Activated CD4-positive, alpha-beta memory T cell treated with anti-CD3 and anti-CD28 coated beads, Interleukin-2, amount 10 ng/mL, durations not matched to agents 7 days and 5 days (primary cell): ENCODE measurements at regions of chr7 and their contacts with region 1.

Region 1: GRCh38 chr7:155298834-155299534 is 1.3 kb downstream of the INSIG1 start:
- DNase-seq: peak; percentile 99
- H3K4me3 Mint-ChIP-seq: peak overlapping the region; percentile 89
- H3K27ac Mint-ChIP-seq: peak overlapping the region; percentile 99
- H3K4me1 Mint-ChIP-seq: peaks cover 64% of the 10 kb centered on the region
- H3K27me3 Mint-ChIP-seq: no peaks in the 10 kb centered on the region

Region 2: DNA sequence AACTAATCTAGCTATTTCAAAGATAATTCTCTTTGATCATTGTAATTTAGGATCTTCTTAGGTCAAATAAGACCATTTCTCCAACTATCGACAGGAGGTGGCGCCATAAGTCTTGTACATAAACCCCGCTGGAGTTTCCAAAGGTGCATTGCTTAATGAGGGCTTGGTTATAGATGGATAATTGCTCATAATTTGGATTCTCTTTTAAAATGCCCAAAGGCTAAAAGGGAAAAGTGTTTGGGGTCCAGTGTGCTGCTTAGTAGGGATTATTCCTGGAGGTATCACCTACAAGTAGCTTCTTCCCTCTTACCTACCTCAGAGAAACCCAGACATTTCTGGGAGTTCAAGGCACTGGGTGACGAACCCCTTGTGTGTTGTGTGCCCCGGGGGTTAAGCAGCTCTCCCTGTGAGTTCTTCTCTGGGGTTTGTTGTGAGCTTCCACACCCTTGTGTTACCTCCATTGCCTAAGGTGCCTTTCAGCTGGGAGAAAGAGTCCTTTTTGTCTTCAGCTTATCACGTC is 371.3 kb before region 1 on chr7:
- CTCF ChIA-PET with region 1: interaction called, 10 read pairs
- POLR2A ChIA-PET with region 1: interaction called, 40 read pairs
- DNase-seq: peak; percentile 82
- H3K4me3 Mint-ChIP-seq: peak overlapping the region; percentile 92
- H3K27ac Mint-ChIP-seq: peak overlapping the region; percentile 73
- H3K4me1 Mint-ChIP-seq: peaks cover 17% of the 10 kb centered on the region
- H3K27me3 Mint-ChIP-seq: peaks cover 27% of the 10 kb centered on the region

Region 3: DNA sequence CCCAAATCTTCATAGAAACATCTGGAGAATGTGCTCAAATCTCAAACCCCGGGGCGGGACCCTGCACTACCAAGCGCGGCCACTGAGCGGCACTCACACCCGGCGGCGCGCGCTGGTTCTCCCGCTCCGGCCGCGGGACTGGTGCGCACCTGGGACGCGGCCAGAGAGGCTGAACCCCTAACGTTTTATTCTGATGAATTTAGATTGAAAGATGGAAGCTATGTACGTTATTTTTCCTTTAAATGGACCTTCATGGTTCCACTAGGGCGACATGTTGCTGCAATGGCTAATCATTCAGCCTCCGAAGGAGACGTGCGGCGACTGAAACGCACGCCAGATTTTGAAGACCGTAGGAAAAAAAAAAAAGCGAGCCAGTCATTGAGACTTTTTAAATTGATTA is 108.3 kb before region 1 on chr7:
- CTCF ChIA-PET with region 1: interaction called, 20 read pairs
- POLR2A ChIA-PET with region 1: interaction called, 32 read pairs
- DNase-seq: peak; percentile 72
- H3K4me3 Mint-ChIP-seq: no peak overlapping the region
- H3K27ac Mint-ChIP-seq: no peak overlapping the region
- H3K4me1 Mint-ChIP-seq: peaks cover 42% of the 10 kb centered on the region
- H3K27me3 Mint-ChIP-seq: peaks cover 1% of the 10 kb centered on the region

Region 4: DNA sequence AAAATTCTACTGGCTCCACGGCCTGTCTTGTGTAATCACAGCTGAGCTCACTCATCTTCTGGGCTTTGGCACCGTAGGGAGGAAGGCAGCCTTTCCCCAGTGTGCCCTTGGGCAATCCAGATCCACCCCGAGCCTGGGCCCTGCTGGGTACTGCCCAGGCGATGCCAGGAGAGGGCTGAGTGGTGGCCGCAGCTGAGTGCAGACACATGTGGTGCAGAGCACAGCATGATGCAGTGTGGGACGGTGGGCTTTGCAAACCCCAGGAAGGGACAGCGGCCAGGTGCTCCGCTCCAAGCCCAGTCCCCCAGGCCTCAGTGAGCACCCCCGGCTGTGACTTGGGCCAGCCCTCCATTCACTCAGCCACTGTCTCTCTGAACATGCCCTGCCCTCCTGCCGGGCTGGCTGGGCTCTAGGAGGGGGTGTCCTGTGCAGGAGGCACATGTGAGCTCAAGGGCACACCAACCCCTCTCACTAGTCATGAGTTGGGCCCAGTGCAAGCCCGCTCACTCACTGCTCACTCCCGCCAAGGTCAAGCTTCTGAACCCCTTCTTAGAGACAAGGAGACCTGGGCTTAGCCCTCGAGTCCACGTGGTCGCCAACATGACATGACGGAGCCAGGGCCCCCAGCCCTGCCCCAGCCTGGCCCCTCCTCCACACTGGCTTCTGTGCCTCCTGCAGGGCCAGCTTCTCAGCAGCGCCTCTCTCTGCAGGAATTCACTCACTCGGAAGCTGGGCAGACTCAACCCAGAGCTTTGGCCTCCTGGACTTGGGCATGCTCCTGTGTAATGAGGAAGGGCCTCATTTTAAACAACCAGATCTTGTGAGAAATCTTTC is 78.8 kb before region 1 on chr7:
- CTCF ChIA-PET with region 1: no interaction called
- POLR2A ChIA-PET with region 1: interaction called, 12 read pairs
- DNase-seq: no peak
- H3K4me3 Mint-ChIP-seq: no peak overlapping the region
- H3K27ac Mint-ChIP-seq: no peak overlapping the region
- H3K4me1 Mint-ChIP-seq: peaks cover 20% of the 10 kb centered on the region
- H3K27me3 Mint-ChIP-seq: no peaks in the 10 kb centered on the region

Region 5: GRCh38 chr7:155277690-155277994 is 21.3 kb before region 1 on chr7:
- CTCF ChIA-PET with region 1: interaction called, 6 read pairs
- POLR2A ChIA-PET with region 1: interaction called, 145 read pairs
- DNase-seq: peak; percentile 59
- H3K4me3 Mint-ChIP-seq: no peak overlapping the region
- H3K27ac Mint-ChIP-seq: peak overlapping the region; percentile 55
- H3K4me1 Mint-ChIP-seq: peaks cover 64% of the 10 kb centered on the region
- H3K27me3 Mint-ChIP-seq: peaks cover 25% of the 10 kb centered on the region

Region 6: GRCh38 chr7:155312633-155313032 is 13.6 kb after region 1 on chr7:
- CTCF ChIA-PET with region 1: interaction called, 4 read pairs
- POLR2A ChIA-PET with region 1: interaction called, 14 read pairs
- DNase-seq: no peak
- H3K4me3 Mint-ChIP-seq: no peak overlapping the region
- H3K27ac Mint-ChIP-seq: no peak overlapping the region
- H3K4me1 Mint-ChIP-seq: peaks cover 4% of the 10 kb centered on the region
- H3K27me3 Mint-ChIP-seq: peaks cover 3% of the 10 kb centered on the region

Region 7: GRCh38 chr7:155644178-155644970 is 345.4 kb after region 1 on chr7 and contains the start of gene RBM33:
- CTCF ChIA-PET with region 1: no interaction called
- POLR2A ChIA-PET with region 1: interaction called, 19 read pairs
- DNase-seq: peak; percentile 80
- H3K4me3 Mint-ChIP-seq: peak within 1 kb of the TSS; percentile 98
- H3K27ac Mint-ChIP-seq: peak within 1 kb of the TSS; percentile 97
- H3K4me1 Mint-ChIP-seq: peaks cover 49% of the 10 kb centered on the region
- H3K27me3 Mint-ChIP-seq: no peaks in the 10 kb centered on the region
- total RNA-seq, gene RBM33: 75.8 to 76.5 TPM